Endothelial cell of umbilical vein (primary cell): ENCODE measurements at regions of chr1 and their contacts with region 1.

Region 1: DNA sequence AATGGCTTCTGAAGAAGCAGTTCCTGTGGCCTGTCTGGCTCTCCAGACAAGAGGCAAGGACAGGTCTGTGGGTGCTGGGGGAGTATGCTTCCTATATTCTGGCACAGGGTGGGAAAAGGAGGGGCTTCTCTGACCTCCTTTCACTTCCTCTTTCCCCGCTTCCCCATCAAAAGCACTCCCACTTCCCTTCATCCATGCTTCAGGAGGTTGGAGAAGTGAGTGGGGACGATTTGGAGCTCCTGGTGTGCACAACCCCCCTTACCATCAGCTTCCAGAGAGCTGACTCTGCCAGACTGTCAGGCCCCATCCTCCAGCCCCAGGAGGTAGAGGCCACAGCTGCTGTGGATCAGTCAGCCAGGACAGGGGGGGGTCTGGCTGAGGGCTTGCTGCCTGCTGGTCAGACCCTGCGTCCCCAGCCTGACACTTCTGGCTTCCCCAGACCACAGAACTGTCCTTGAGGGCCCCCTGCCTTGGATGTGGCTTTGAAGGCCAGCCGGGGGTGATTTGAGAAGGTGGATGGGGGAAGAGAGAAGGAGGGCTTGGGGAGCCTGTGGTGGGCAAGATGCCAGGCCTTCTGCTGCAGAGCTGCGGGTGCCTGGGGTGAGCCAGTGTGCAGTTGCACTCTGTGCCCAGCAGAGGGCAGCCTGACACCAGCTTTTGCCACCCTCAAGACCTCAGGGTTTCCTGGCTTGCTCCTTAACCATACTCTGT is 21.5 kb upstream of the TMEM222 start:
- DNase-seq: peak; percentile 89
- H3K4me3 ChIP-seq: no peak overlapping the region
- H3K27ac ChIP-seq: no peak overlapping the region
- H3K4me1 ChIP-seq: no peaks in the 10 kb centered on the region
- H3K27me3 ChIP-seq: no peaks in the 10 kb centered on the region
- CTCF ChIP-seq: peak; percentile 95 to 98
- POLR2A ChIP-seq: no peak

Region 2: GRCh38 chr1:27097484-27097917 is 203.0 kb before region 1 on chr1:
- CTCF ChIA-PET with region 1: interaction called, 25 read pairs
- POLR2A ChIA-PET with region 1: no interaction called
- dilution Hi-C with region 1: no loop called
- intact Hi-C with region 1: no loop called
- DNase-seq: peak; percentile 64
- H3K4me3 ChIP-seq: no peak overlapping the region
- H3K27ac ChIP-seq: no peak overlapping the region
- H3K4me1 ChIP-seq: no peaks in the 10 kb centered on the region
- H3K27me3 ChIP-seq: no peaks in the 10 kb centered on the region
- CTCF ChIP-seq: peak; percentile 89 to 91
- POLR2A ChIP-seq: no peak

Region 3: GRCh38 chr1:27179379-27179778 is 121.1 kb before region 1 on chr1:
- CTCF ChIA-PET with region 1: no interaction called
- POLR2A ChIA-PET with region 1: no interaction called
- dilution Hi-C with region 1: no loop called
- intact Hi-C with region 1: no loop called
- DNase-seq: no peak
- H3K4me3 ChIP-seq: no peak overlapping the region
- H3K27ac ChIP-seq: no peak overlapping the region
- H3K4me1 ChIP-seq: no peaks in the 10 kb centered on the region
- H3K27me3 ChIP-seq: no peaks in the 10 kb centered on the region
- CTCF ChIP-seq: no peak
- POLR2A ChIP-seq: no peak

Region 4: DNA sequence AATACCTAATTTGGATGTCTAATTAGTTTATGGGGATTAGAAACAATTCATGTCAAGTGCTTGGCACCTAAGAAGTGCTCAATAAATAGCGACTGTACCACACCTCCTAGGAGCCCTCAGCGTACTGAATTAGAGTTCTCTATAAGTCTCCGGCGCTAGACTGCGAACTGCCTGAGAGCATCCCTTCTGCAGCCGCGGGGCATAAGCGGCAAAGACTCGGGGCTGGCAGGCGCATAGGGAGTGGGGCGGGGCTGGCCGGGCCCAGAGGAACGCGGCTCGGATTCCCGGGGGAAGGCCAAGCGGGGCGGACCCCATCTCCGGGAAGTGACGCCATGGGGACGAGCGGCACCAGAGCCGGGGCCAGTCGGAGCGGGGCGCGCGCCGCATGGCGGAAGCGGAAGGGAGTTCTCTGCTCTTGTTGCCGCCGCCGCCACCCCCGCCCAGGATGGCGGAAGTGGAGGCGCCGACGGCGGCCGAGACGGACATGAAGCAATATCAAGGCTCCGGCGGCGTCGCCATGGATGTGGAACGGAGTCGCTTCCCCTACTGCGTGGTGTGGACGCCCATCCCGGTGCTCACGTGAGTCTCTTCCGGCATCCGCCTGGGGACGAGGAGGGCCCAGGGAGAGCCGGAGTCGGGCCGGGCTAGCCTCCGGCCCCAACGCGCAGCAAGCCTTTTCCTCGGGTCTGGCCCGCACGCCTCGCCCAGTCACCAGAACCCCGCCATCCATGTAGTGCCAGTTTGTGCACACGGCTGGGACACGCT is 21.5 kb after region 1 on chr1 and contains the start of gene TMEM222:
- CTCF ChIA-PET with region 1: interaction called, 8 read pairs
- POLR2A ChIA-PET with region 1: interaction called, 3 read pairs
- dilution Hi-C with region 1: no loop called
- intact Hi-C with region 1: loop called (anchors 2 kb)
- DNase-seq: peak; percentile 97
- H3K4me3 ChIP-seq: peak within 1 kb of the TSS; percentile 47 to 82 (median 68)
- H3K27ac ChIP-seq: peak within 1 kb of the TSS; percentile 77
- H3K4me1 ChIP-seq: peaks cover 11% of the 10 kb centered on the region
- H3K27me3 ChIP-seq: no peaks in the 10 kb centered on the region
- CTCF ChIP-seq: no peak
- POLR2A ChIP-seq: peak; percentile 94
- total RNA-seq, gene TMEM222: 43.1 and 45.8 TPM in 2 replicates

Region 5: DNA sequence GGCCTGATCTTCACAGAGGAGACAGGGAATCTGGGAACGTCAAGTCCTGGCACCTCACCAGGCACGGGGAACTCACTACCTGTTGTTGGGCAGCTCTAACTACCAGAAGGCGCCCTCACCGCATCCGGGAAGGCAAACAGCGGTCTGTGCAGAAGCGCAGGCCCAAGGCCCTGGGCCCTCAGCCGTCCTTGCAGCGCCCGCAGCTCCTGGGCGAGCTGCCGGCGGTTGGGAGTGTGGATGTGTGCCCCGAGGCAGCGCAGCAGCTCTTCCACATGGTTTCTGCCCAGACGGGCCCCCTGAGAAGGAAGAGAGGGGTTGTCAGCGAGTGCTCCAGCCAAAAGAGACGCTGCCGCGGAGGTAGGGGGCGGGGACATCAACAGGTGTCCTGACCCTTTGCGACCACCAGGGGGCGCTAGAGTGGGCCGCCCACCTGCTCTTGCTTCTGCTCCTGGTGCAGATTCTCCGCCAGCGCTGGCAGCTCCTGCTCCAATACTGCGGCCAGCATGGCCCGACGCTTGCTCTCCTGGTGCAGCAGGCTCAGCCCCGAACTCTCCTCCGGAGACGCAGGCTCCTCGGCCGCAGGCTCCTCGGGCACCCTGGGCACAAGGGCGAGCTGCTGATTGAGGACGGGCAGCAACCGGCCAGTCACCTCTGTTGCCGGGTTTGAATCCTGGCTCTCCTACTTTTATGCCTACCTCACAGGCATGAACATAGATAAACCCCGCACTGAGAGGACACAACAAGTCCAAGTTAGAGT is 57.0 kb after region 1 on chr1:
- CTCF ChIA-PET with region 1: interaction called, 10 read pairs
- POLR2A ChIA-PET with region 1: no interaction called
- dilution Hi-C with region 1: no loop called
- intact Hi-C with region 1: no loop called
- DNase-seq: peak; percentile 57
- H3K4me3 ChIP-seq: no peak overlapping the region
- H3K27ac ChIP-seq: no peak overlapping the region
- H3K4me1 ChIP-seq: no peaks in the 10 kb centered on the region
- H3K27me3 ChIP-seq: no peaks in the 10 kb centered on the region
- CTCF ChIP-seq: peak; percentile 90 to 99
- POLR2A ChIP-seq: no peak

Region 6: DNA sequence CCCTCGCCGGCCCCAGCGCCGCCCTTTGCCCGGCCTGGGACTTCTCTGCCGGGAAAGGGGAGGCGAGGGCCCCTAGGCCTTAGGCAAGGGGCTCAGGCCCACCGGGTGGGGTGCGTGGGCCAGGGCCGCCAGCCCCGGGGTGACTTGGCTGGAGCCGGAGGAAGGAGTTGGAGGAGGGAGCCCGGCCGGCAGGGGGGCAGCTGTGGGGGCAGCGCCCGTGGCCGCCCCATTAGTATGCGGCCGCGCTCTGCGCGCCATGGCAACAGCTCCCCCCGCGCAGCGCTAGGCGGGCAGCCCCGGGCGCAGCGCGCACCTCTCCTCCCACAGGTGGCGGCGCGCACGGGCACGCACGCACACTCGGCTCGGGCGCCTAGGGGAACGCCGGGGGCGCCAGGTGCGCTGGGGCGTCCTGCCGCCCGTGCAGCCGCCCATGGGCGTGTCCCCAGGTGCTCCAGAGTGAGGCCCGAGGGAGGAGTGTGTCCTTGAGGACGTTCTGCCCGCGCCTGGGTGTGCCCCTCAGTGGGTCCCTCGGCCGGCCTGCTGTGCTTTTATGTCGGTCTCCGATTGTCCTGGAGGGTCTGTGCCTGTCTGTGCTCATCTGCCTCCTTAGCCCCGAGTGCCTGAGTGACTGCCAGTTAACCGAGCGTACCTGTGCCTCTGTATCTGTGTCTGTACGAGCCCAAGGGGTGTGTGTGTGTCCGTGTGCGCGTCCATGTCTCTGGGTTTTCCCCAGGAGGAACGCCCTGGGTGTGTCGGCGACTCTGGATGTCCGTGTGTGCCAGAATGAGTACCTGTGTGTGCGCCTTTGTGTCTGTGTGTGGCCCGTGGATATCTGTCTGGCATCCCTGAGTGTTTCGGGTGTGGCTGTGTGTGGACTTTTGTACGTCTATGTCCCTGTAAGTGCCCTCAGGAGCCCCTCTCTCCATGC is 227.7 kb after region 1 on chr1:
- CTCF ChIA-PET with region 1: no interaction called
- POLR2A ChIA-PET with region 1: no interaction called
- dilution Hi-C with region 1: no loop called
- intact Hi-C with region 1: no loop called
- DNase-seq: peak; percentile 22
- H3K4me3 ChIP-seq: no peak overlapping the region
- H3K27ac ChIP-seq: no peak overlapping the region
- H3K4me1 ChIP-seq: peaks cover 9% of the 10 kb centered on the region
- H3K27me3 ChIP-seq: peaks cover 3 to 5% of the 10 kb centered on the region in 2 experiments
- CTCF ChIP-seq: no peak
- POLR2A ChIP-seq: no peak

Region 7: DNA sequence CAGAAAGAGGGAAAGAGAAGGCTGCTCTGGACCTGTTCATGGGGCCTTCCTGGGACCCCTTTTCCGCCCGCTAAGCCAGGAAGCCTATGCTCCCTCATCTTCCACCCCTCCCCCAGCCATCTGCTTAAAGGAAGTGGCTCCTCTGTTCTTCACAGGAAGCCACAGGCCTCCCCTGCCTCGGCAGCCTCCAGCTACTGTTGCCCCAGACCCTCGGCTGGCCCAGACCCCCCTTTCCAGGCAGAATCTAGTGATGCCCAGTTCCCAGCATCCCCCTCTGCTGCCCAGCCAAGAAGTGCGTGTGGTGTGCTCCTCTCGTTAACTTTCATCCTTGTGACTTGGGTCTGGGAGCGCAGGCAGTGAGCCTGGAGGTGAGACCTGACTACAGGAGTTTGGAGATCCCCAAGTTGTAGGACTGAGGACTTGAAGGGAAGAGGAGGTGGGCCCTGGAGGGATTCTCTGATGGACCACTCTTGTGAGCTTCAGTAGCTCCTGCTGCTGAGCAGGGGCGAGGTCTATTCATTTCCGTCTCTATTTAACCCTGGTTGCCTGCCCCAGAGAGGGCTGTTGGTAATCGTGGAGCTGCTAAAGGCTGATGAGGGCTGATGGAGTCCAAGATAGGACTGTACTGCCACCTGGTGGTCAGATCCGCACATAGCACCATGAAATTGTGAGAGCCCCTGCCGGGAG is 362.4 kb after region 1 on chr1:
- CTCF ChIA-PET with region 1: interaction called, 13 read pairs
- POLR2A ChIA-PET with region 1: no interaction called
- dilution Hi-C with region 1: no loop called
- intact Hi-C with region 1: loop called (anchors 5 kb)
- DNase-seq: peak; percentile 83
- H3K4me3 ChIP-seq: no peak overlapping the region
- H3K27ac ChIP-seq: no peak overlapping the region
- H3K4me1 ChIP-seq: peaks cover 14% of the 10 kb centered on the region
- H3K27me3 ChIP-seq: no peaks in the 10 kb centered on the region
- CTCF ChIP-seq: peak; percentile 80 to 85
- POLR2A ChIP-seq: no peak